Activated CD4-positive, alpha-beta T cell treated with anti-CD3 and anti-CD28 coated beads, Interleukin-2, amount 10 ng/mL, durations not matched to agents 24 days and 14 days (primary cell): ENCODE measurements at regions of chr5 and their contacts with region 1.

Region 1: GRCh38 chr5:143023411-143024096 is 253.4 kb downstream of the ARHGAP26 start:
- DNase-seq: peak; percentile 84
- H3K4me3 Mint-ChIP-seq: peak overlapping the region; percentile 28
- H3K27ac Mint-ChIP-seq: peak overlapping the region; percentile 56
- H3K4me1 Mint-ChIP-seq: peaks cover 46% of the 10 kb centered on the region
- H3K27me3 Mint-ChIP-seq: no peaks in the 10 kb centered on the region

Region 2: DNA sequence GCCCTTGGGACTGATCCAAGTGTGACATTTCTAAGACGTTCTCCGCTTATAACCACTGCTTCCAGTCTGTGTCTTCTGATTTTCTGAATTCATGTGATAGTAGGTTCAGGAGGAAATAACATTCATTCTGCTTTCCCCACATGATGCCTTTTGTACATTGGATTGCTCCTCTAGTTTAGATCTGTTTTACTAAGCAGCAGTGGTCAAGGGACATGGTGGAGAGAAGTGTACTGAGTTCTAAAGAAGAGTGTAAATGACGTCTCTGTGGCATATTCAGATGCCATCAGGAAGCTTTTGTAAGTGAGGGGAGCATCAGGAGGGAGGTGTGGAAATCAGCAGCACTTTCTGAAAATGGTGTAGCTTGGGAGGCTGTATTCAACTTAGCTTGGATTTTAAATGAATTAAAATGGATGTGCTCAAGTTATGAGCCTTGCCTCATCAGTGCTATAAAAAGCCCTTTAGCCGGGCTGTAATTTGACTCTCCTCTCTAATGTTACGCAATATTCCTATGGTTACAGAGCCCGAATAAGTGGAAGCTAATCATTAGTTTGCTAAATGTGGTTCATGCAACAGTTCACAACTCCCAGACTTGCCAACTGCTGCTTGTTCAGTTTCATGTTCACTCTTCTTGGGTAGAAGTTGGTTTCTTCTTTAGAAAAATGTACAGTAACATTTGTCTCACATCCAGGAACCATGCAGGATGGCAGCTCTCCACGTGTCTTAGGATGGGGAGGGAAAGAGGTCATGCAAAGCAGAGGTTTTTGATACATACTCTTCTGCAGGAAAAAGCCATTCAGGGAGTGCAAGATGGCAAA is 27.9 kb after region 1 on chr5:
- intact Hi-C with region 1: loop called (anchors 1 kb)
- DNase-seq: no peak
- H3K4me3 Mint-ChIP-seq: no peak overlapping the region
- H3K27ac Mint-ChIP-seq: peak overlapping the region; percentile 70
- H3K4me1 Mint-ChIP-seq: peaks cover 62% of the 10 kb centered on the region
- H3K27me3 Mint-ChIP-seq: no peaks in the 10 kb centered on the region

Region 3: DNA sequence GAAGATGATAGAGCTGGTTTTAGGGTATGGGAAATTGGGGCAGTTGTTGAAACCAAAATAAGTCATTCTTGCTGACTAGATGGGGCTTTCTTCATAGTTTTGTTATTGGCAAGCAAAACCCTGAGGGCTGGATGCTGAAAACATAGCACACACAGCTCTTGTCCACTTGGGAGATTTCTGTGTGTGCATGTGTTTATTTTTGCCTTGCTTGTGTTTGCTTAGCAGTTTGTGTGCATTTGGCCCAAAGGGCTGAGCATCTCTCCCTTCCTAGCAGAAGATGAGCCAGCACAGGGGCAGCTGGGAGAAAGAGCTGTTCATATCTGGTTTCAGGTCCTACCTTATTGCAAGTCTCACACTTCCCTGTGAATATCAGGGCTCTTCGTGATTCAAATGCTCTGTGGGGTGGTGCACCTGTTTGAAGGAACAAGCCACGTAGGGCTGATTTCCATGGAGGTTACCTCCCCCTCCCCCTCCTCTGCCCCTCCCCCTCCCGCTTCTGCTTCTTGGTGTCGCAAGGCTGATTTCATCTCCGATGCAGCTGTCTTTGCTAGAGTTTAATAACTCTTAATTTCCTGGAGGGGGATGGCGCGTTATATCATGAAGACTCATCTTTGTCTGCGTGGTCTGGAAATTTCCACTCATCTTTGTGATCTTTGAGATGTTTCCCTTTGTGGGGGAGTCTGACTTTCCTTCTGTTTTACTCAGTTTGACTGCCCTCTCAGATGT is 43.2 kb after region 1 on chr5:
- intact Hi-C with region 1: loop called (anchors 2 kb)
- DNase-seq: no peak
- H3K4me3 Mint-ChIP-seq: peak overlapping the region; percentile 29
- H3K27ac Mint-ChIP-seq: peak overlapping the region; percentile 87
- H3K4me1 Mint-ChIP-seq: peaks cover 30% of the 10 kb centered on the region
- H3K27me3 Mint-ChIP-seq: no peaks in the 10 kb centered on the region

Region 4: GRCh38 chr5:143124593-143124992 is 101.0 kb after region 1 on chr5:
- intact Hi-C with region 1: loop called (anchors 5 kb)
- DNase-seq: no peak
- H3K4me3 Mint-ChIP-seq: no peak overlapping the region
- H3K27ac Mint-ChIP-seq: no peak overlapping the region
- H3K4me1 Mint-ChIP-seq: peaks cover 21% of the 10 kb centered on the region
- H3K27me3 Mint-ChIP-seq: no peaks in the 10 kb centered on the region

Region 5: GRCh38 chr5:143245929-143246561 is 222.5 kb after region 1 on chr5:
- intact Hi-C with region 1: no loop called
- DNase-seq: no peak
- H3K4me3 Mint-ChIP-seq: no peak overlapping the region
- H3K27ac Mint-ChIP-seq: no peak overlapping the region
- H3K4me1 Mint-ChIP-seq: no peaks in the 10 kb centered on the region
- H3K27me3 Mint-ChIP-seq: no peaks in the 10 kb centered on the region